Activated CD4-positive, alpha-beta memory T cell treated with anti-CD3 and anti-CD28 coated beads for 36 hours (primary cell): ENCODE measurements at regions of chr14 and their contacts with region 1.

Region 1: GRCh38 chr14:88168498-88169165 is 154.4 kb downstream of the KCNK10 start:
- DNase-seq: peak; percentile 64
- H3K4me3 Mint-ChIP-seq: no peak overlapping the region
- H3K27ac Mint-ChIP-seq: no peak overlapping the region
- H3K4me1 Mint-ChIP-seq: peaks cover 3% of the 10 kb centered on the region
- H3K27me3 Mint-ChIP-seq: peaks cover 8% of the 10 kb centered on the region

Region 2: GRCh38 chr14:87805315-87805723 is 363.3 kb before region 1 on chr14:
- CTCF ChIA-PET with region 1: interaction called, 5 read pairs
- POLR2A ChIA-PET with region 1: no interaction called
- intact Hi-C with region 1: loop called (anchors 10 kb)
- DNase-seq: peak; percentile 72
- H3K4me3 Mint-ChIP-seq: no peak overlapping the region
- H3K27ac Mint-ChIP-seq: no peak overlapping the region
- H3K4me1 Mint-ChIP-seq: peaks cover 3% of the 10 kb centered on the region
- H3K27me3 Mint-ChIP-seq: no peaks in the 10 kb centered on the region

Region 3: GRCh38 chr14:87944987-87945604 is 223.5 kb before region 1 on chr14:
- CTCF ChIA-PET with region 1: interaction called, 71 read pairs
- POLR2A ChIA-PET with region 1: interaction called, 3 read pairs
- intact Hi-C with region 1: loop called (anchors 1 kb)
- DNase-seq: no peak
- H3K4me3 Mint-ChIP-seq: no peak overlapping the region
- H3K27ac Mint-ChIP-seq: no peak overlapping the region
- H3K4me1 Mint-ChIP-seq: no peaks in the 10 kb centered on the region
- H3K27me3 Mint-ChIP-seq: no peaks in the 10 kb centered on the region

Region 4: GRCh38 chr14:87992718-87993628 is 175.7 kb before region 1 on chr14 and contains the start of gene GALC:
- CTCF ChIA-PET with region 1: interaction called, 11 read pairs
- POLR2A ChIA-PET with region 1: interaction called, 3 read pairs
- intact Hi-C with region 1: no loop called
- DNase-seq: peak; percentile 98
- H3K4me3 Mint-ChIP-seq: peak within 1 kb of the TSS; percentile 93
- H3K27ac Mint-ChIP-seq: peak within 1 kb of the TSS; percentile 96
- H3K4me1 Mint-ChIP-seq: peaks cover 43% of the 10 kb centered on the region
- H3K27me3 Mint-ChIP-seq: no peaks in the 10 kb centered on the region
- total RNA-seq, gene GALC: 14.4 to 14.7 TPM

Region 5: DNA sequence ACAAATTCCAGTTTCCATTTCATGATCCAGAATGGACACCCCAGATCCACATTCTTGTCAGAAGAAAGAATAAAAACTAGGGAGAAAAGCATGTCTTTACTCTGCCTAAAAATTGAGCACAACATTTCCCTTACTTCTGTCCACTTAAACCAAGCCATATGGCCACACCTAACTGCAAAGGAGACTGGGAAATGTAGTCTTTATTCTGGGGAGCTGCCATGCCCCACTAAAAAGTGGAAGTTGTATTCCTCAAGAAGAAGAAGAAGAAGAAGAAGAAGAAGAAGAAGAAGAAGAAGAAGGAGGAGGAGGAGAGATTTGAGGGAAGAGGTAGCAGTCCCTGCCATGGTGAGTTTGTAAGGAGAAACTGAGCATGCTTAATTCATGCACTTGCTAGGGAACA is 79.2 kb before region 1 on chr14:
- CTCF ChIA-PET with region 1: no interaction called
- POLR2A ChIA-PET with region 1: no interaction called
- intact Hi-C with region 1: no loop called
- DNase-seq: no peak
- H3K4me3 Mint-ChIP-seq: no peak overlapping the region
- H3K27ac Mint-ChIP-seq: no peak overlapping the region
- H3K4me1 Mint-ChIP-seq: no peaks in the 10 kb centered on the region
- H3K27me3 Mint-ChIP-seq: no peaks in the 10 kb centered on the region

Region 6: DNA sequence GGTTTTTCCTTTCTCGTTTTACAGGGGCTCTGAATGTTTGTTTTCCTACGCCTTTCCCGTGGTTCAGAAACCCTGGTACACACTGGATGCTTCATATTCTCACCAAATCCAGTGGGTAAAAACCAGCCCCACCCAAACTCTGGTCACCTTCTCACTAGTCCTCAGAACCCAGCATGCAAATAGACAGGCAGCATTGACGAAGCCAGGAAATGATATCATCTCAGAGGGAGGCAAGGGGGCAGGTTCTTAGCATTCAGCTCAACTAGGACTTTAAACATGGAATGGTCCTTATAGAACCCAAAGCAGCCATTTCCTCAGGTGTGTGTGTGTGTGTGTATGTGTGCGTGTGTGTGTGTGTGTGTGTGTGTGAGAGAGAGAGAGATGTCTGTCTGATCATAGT is 12.4 kb after region 1 on chr14:
- CTCF ChIA-PET with region 1: interaction called, 17 read pairs
- POLR2A ChIA-PET with region 1: no interaction called
- intact Hi-C with region 1: no loop called
- DNase-seq: no peak
- H3K4me3 Mint-ChIP-seq: no peak overlapping the region
- H3K27ac Mint-ChIP-seq: no peak overlapping the region
- H3K4me1 Mint-ChIP-seq: peaks cover 2% of the 10 kb centered on the region
- H3K27me3 Mint-ChIP-seq: no peaks in the 10 kb centered on the region